ENCODE measurements at regions of chr7 and their contacts with region 1.

Region 1: GRCh38 chr7:4610768-4611467 is 71.2 kb upstream of the FOXK1 start:
- DNase-seq: peak in 2 of 3 donors; percentile 39 to 60
- ATAC-seq: peak; percentile 85 to 91 (median 89)
- H3K4me3 ChIP-seq: no peak overlapping the region
- H3K27ac ChIP-seq: no peak overlapping the region
- H3K4me1 ChIP-seq: no peaks in the 10 kb centered on the region
- H3K27me3 ChIP-seq: no peaks in the 10 kb centered on the region
- CTCF ChIP-seq: peak; percentile 72 to 93 (median 82)
- POLR2A ChIP-seq: no peak

Region 2: GRCh38 chr7:4338556-4338955 is 272.4 kb before region 1 on chr7:
- intact Hi-C with region 1: no loop called
- DNase-seq: no peak
- ATAC-seq: no peak
- H3K4me3 ChIP-seq: no peak overlapping the region
- H3K27ac ChIP-seq: no peak overlapping the region
- H3K4me1 ChIP-seq: no peaks in the 10 kb centered on the region
- H3K27me3 ChIP-seq: no peaks in the 10 kb centered on the region
- CTCF ChIP-seq: no peak
- POLR2A ChIP-seq: no peak

Region 3: GRCh38 chr7:4468320-4469102 is 142.4 kb before region 1 on chr7:
- intact Hi-C with region 1: no loop called
- DNase-seq: no peak
- ATAC-seq: no peak
- H3K4me3 ChIP-seq: no peak overlapping the region
- H3K27ac ChIP-seq: no peak overlapping the region
- H3K4me1 ChIP-seq: no peaks in the 10 kb centered on the region
- H3K27me3 ChIP-seq: no peaks in the 10 kb centered on the region
- CTCF ChIP-seq: no peak
- POLR2A ChIP-seq: no peak

Region 4: DNA sequence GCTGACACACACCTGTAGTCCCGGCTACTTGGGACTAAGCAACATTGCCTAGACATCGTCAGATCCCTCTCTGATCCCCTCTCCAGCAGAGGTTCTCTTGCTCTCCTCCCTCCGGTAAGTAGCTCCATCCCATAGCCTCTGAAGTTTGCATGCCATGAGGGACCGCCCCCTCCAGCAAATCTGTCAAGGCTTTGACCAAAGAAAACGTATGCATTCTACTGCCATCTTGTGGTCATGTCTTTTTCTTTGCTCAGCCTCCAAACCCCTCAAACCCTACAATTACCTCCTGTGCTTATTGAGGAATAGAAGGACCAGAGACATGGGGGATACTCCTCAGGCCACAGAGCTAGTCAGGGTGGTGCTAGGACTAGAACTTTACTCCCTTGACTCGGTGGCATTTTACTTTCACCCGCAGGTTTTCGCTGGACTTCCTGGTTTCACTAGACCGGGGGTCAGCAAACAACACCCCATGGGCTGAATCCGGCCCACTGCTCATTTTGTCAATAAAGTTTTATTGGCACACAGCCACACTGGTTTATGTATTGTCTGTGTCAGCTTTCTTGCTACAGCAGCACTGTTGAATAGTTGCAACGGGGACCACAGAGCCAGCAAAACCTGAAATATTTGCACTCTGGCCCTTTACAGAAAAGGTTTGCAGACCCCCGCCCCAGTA is 131.4 kb before region 1 on chr7:
- intact Hi-C with region 1: no loop called
- DNase-seq: peak in 1 of 3 donors; percentile 35
- ATAC-seq: peak; percentile 64 to 80 (median 72)
- H3K4me3 ChIP-seq: no peak overlapping the region
- H3K27ac ChIP-seq: no peak overlapping the region
- H3K4me1 ChIP-seq: no peaks in the 10 kb centered on the region
- H3K27me3 ChIP-seq: no peaks in the 10 kb centered on the region
- CTCF ChIP-seq: peak in 3 of 4 donors; percentile 40 to 48 (median 42)
- POLR2A ChIP-seq: no peak

Region 5: DNA sequence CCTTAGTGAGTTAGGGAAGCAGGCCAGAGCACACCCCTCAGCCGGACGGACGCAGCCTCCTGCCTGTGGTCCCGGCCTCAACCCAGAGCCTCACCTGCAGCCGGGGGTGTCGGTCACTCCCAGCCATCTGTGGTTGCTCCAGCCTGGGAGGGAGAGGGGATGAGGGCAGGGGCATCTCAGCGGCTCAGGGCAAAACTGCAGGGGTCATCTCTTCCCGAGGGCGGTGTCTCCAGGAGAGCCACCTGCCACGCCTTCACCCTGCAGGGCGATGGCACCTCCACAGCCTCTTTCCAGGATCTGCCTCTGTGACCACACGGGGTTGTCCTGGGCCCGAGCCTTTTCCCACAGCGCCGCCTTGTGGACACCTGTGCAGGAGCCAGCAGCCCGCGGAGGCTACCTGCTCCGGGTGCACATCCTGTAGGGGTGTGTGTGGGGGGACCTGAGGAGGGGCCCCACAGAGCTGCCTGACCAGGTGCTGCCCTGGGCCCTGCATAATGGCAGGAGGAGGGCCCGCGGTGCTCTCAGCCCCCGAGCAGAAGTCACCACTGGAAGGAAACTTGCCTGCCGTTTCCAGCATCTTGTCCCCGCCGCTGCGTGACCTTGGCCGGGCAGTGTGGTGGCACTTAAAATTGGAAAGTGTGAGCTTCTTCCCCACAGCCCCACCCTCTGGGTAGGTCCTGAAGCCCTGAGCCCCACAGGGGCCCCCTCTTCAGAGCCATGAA is 143.0 kb after region 1 on chr7:
- intact Hi-C with region 1: loop called in 1 of 2 experiments (anchors 10 kb)
- DNase-seq: peak; percentile 84 to 88 (median 87)
- ATAC-seq: peak; percentile 91 to 97 (median 93)
- H3K4me3 ChIP-seq: no peak overlapping the region
- H3K27ac ChIP-seq: no peak overlapping the region
- H3K4me1 ChIP-seq: no peaks in the 10 kb centered on the region
- H3K27me3 ChIP-seq: no peaks in the 10 kb centered on the region
- CTCF ChIP-seq: peak; percentile 86 to 93 (median 92)
- POLR2A ChIP-seq: no peak

Region 6: GRCh38 chr7:4878336-4879335 is 267.7 kb after region 1 on chr7:
- intact Hi-C with region 1: no loop called
- DNase-seq: no peak
- ATAC-seq: no peak
- H3K4me3 ChIP-seq: no peak overlapping the region
- H3K27ac ChIP-seq: no peak overlapping the region
- H3K4me1 ChIP-seq: peaks cover 0 to 7% (median 0%) of the 10 kb centered on the region in 4 donors
- H3K27me3 ChIP-seq: peaks cover 0 to 9% of the 10 kb centered on the region in 2 donors
- CTCF ChIP-seq: no peak
- POLR2A ChIP-seq: no peak

Measured in right lobe of liver (tissue), 6 donors.